Activated naive CD4-positive, alpha-beta T cell treated with anti-CD3 and anti-CD28 coated beads for 36 hours (primary cell): ENCODE measurements at regions of chr17 and their contacts with region 1.

Region 1: DNA sequence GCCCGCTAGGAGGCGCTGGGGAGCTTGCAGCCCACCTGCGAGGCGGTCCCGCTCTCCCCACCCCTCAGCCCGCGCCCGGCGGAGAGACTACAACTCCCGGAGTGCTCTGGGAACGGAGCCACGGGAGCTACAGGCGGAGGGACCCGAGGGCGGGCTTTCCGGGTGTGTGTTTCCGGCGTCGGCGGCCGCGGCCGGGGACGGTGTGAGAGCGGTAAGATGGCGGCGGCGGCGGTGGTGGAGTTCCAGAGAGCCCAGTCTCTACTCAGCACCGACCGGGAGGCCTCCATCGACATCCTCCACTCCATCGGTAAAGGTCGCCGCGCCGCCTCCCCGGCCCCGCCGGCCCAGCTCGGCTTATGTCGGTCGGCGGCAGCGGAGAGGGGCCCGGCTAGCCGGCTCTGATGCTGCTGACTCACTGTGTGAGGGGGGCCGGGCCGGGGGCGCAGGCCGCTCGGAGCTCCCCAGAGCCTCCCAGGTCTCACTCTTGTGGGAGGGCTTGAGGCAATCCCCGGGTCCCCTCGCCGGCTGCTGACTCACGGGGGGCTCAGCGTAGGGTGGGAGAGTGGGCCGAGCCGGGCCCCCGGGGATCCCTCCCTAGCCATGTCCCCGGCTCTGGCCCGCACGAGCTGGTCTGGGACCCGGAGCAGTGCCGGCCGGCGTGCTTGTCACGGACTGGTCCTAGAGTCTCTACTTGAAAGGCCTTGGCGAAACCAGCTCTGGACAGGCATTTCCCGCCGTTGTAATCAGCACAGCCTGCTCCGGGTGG is at the start of gene PSMD11:
- DNase-seq: peak; percentile 98
- H3K4me3 Mint-ChIP-seq: peak within 1 kb of the TSS; percentile 93
- H3K27ac Mint-ChIP-seq: peak within 1 kb of the TSS; percentile 89
- H3K4me1 Mint-ChIP-seq: peaks cover 25% of the 10 kb centered on the region
- H3K27me3 Mint-ChIP-seq: peaks cover 5% of the 10 kb centered on the region
- total RNA-seq, gene PSMD11: 132 to 145 TPM

Region 2: DNA sequence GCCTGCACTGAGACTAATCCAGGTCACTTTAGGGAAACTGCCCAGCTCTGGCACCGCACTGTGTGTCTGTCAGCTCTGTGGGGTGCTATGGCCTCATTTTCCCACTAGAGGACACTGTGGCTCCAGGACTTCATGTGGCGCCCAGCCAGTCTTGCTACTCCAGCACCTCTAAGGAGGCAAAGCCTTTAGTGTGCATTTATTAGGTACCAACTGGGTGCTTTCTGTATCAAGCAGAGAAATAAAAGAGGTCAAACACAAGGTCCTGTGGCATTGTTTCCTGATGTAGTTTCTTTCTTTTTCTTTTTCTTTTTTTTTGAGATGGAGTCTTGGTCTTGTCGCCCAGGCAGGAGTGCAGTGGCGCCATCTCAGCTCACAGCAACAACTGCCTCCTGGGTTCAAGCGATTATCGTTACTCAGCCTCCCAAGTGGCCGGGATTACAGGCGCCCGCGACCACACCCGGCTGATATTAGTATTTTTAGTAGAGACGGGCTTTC is 191.3 kb before region 1 on chr17:
- CTCF ChIA-PET with region 1: interaction called, 4 read pairs
- intact Hi-C with region 1: loop called (anchors 5 kb)
- DNase-seq: peak; percentile 89
- H3K4me3 Mint-ChIP-seq: no peak overlapping the region
- H3K27ac Mint-ChIP-seq: no peak overlapping the region
- H3K4me1 Mint-ChIP-seq: no peaks in the 10 kb centered on the region
- H3K27me3 Mint-ChIP-seq: peaks cover 3% of the 10 kb centered on the region

Region 3: DNA sequence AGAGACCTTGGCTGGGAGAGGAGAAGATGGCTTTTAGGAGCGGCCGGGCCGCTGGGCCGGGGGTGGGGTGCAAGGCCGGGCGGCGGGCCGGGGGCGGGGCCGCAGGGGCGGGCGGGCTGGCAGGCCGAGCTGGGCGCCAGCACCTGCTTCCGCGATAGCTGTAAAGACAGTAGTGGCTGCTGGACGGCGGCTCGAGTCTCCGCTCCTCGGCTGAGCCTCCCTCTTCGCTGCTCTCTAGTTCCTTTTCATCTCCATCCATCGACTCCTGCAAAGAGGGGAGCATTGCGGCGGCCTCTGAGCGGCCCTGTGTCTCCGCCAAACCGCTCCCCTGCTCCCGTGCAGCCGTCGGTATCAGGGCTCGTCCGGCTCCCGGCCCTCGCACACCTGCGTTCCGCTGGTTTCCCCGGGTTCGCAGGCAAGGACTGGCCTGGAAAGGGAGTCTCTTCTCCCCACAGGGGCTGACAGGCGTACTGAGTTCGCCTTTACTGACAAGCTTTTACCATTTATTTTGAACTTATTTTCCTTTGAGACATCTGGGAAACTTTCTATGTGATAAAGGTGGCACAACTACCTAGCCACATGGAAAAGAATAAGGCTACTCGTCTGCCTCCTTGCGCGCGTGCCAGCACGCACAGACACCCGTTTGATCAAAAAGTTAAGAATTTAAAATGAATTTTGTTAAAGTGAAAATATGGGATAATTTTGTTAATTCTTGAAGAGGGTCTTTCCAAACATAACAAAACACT is 102.5 kb before region 1 on chr17 and contains the start of gene C17orf75:
- CTCF ChIA-PET with region 1: interaction called, 4 read pairs
- intact Hi-C with region 1: loop called (anchors 2 kb)
- DNase-seq: peak; percentile 88
- H3K4me3 Mint-ChIP-seq: peak within 1 kb of the TSS; percentile 86
- H3K27ac Mint-ChIP-seq: peak within 1 kb of the TSS; percentile 90
- H3K4me1 Mint-ChIP-seq: peaks cover 20% of the 10 kb centered on the region
- H3K27me3 Mint-ChIP-seq: no peaks in the 10 kb centered on the region
- total RNA-seq, gene C17orf75: 25.3 to 26.6 TPM

Region 4: DNA sequence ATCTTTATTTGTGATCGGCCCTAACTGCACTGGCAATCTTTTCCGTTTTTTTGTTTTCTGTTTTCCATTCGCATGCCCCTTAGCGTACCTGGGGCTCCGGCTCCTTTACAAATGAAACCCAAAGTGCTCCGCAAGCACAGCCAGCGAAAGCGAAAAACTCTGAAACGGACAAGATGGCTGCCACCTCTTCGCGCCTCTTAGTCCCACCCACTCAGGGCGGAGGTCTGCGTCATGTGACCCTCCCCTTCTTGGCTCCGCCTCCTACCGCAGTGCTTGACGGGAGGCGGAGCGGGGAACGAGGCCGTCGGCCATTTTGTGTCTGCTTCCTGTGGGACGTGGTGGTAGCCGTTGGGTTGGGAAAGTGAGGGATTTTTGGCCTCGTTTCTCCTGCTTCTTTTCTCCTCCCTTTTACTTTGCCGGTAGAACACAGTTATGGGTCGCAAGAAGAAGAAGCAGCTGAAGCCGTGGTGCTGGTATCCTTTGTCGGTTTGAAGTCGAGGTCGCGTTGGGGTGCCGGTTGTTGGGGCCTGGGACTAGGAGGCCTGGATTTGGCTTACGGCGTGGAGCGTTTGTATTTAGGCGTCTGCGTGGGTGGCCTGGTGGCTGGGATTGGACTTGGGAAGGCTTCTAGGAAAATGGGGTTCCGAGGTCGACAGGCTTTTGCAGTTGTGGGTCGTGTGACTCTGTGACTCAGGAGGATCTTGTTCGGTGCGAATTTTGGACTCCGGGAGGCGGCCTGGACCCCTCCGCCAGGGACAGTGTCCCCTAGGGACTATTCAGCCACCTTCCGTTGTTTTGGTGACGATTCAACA is 94.4 kb before region 1 on chr17 and contains the start of gene ZNF207:
- CTCF ChIA-PET with region 1: interaction called, 6 read pairs
- intact Hi-C with region 1: loop called (anchors 1 kb)
- DNase-seq: peak; percentile 98
- H3K4me3 Mint-ChIP-seq: peak within 1 kb of the TSS; percentile 97
- H3K27ac Mint-ChIP-seq: peak within 1 kb of the TSS; percentile 99
- H3K4me1 Mint-ChIP-seq: peaks cover 40% of the 10 kb centered on the region
- H3K27me3 Mint-ChIP-seq: no peaks in the 10 kb centered on the region
- total RNA-seq, gene ZNF207: 213 to 230 TPM

Region 5: DNA sequence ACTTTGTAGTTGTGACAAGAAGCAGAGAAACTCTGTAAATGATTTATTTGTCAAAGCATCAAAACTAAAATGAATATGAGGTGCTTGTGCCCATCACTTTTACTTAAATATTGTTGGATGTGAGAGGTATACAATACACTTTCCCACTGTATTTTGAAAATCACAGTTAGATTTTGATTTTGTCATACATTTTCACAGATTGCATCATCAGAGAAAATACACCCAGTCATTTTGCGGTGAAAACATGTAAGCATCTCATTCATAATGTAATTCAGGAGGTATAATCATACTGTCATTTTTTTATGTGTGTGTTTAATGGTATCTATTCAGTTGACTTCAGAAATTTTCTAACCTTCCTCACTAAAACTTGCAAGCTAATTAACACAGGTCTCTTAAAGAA is 83.2 kb before region 1 on chr17:
- CTCF ChIA-PET with region 1: no interaction called
- intact Hi-C with region 1: no loop called
- DNase-seq: no peak
- H3K4me3 Mint-ChIP-seq: no peak overlapping the region
- H3K27ac Mint-ChIP-seq: no peak overlapping the region
- H3K4me1 Mint-ChIP-seq: peaks cover 38% of the 10 kb centered on the region
- H3K27me3 Mint-ChIP-seq: no peaks in the 10 kb centered on the region

Region 6: GRCh38 chr17:32429598-32429997 is 14.9 kb before region 1 on chr17:
- CTCF ChIA-PET with region 1: interaction called, 11 read pairs
- intact Hi-C with region 1: no loop called
- DNase-seq: no peak
- H3K4me3 Mint-ChIP-seq: no peak overlapping the region
- H3K27ac Mint-ChIP-seq: no peak overlapping the region
- H3K4me1 Mint-ChIP-seq: no peaks in the 10 kb centered on the region
- H3K27me3 Mint-ChIP-seq: no peaks in the 10 kb centered on the region

Region 7: DNA sequence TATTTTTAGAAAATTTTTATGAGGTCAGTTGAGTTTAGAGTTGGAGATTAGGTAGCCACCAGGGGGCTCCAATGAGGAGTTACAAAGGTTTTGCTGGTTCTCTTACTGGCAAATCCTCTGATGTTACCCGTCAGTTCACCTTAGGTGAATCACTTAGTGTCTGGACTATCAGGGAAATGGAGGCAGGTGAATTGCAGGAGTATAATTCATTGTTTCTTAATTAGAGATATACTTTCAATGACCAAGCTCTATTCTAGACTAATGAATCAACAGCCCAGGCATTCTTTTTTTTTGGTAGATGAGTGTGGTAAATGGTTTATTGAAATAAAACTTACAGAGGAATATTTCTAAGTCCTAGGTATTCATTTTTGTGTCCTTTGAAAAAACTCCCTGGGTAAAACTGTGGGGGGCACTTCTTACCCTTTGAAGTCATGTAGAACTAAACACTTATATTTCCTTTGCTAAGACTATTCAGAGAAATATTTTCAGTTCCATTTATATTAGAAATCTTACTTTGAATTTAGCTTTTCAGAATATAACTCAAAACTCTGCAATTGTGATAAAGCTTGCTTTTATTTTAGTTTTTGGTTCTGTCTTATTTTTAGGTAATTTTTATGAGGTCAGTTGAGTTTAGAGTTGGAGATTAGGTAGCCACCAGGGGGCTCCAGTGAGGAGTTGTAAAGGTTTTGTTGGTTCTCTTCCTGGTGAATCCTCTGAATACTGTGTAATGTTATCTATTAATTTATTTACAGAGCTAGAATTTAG is 17.5 kb after region 1 on chr17:
- CTCF ChIA-PET with region 1: interaction called, 96 read pairs
- intact Hi-C with region 1: loop called (anchors 1 kb)
- DNase-seq: peak; percentile 83
- H3K4me3 Mint-ChIP-seq: no peak overlapping the region
- H3K27ac Mint-ChIP-seq: peak overlapping the region; percentile 72
- H3K4me1 Mint-ChIP-seq: peaks cover 37% of the 10 kb centered on the region
- H3K27me3 Mint-ChIP-seq: no peaks in the 10 kb centered on the region

Region 8: DNA sequence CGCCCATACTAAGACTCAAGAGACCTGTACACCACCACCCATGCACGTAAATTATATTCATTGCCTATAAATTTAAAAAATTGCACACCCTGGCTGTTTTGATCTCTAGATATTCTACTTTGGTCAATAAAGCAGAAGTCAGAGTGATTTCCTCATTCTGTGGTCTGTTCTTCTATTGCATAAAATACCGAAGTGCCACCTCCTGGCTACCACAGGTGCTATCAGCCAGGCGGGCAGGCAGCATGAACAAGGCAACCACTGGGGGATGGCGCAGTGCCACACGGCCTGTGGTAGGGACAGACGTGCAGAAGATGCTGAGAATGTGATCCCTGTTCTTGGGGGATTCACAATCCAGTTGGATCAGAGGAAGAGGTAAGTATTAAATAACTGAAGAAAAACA is 164.6 kb after region 1 on chr17:
- CTCF ChIA-PET with region 1: no interaction called
- intact Hi-C with region 1: loop called (anchors 1 kb)
- DNase-seq: peak; percentile 89
- H3K4me3 Mint-ChIP-seq: no peak overlapping the region
- H3K27ac Mint-ChIP-seq: no peak overlapping the region
- H3K4me1 Mint-ChIP-seq: peaks cover 8% of the 10 kb centered on the region
- H3K27me3 Mint-ChIP-seq: no peaks in the 10 kb centered on the region

Region 9: DNA sequence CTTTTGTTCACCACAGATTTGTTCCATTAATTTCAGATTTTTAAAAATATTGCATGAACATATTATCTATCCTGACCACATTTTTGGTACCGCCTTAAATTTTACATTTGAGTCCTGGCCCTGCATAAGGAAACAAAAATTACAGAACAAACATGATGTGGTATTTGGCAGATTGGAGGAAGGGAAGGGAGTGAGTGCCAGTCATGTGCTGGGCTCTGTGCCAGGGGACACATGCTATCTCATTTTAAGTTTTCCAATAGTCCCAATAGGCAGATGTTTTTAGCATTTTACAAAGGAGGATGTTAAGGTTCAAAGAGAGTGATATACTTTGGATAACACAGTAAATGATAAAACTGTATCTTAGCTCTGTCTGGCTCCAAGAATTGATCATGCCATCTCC is 227.4 kb after region 1 on chr17:
- CTCF ChIA-PET with region 1: no interaction called
- intact Hi-C with region 1: no loop called
- DNase-seq: no peak
- H3K4me3 Mint-ChIP-seq: no peak overlapping the region
- H3K27ac Mint-ChIP-seq: no peak overlapping the region
- H3K4me1 Mint-ChIP-seq: no peaks in the 10 kb centered on the region
- H3K27me3 Mint-ChIP-seq: no peaks in the 10 kb centered on the region